ENCODE measurements at regions of chr6 and their contacts with region 1.

Region 1: DNA sequence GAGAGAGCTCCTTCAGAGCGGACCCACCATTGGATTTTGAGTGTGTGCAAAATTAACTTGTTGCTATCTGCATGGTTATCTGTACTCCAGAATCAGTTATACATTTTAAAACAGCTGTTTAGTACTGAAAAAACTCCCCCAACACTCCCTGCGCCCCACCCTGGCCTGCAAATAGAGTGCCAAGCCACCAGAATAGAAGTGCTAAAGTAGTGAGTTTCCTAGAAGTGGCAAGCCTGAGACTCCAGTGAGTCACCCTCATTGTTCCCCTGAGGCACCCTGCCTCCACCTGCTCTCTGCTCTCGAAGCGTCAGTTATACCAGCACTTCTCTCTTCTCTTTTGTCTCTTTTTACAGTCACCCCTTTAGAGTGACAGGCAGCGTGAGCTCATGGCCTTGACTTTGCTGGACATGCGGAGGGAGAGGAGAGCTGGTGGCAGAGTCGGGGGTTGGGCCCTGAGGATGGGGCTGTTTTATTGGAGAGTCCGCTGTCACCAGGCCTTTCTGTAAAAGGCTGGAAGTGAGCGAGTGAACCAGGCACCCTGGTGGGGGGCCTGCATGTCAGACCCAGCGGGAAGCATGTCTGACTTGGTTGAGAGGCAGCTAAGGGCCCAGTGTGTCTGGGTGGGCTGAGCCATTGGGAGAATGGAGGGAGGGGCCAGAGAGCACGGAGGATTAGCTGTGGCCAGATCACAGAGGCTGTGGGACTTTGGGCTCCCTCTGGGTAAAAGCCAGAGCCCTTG is 10.4 kb downstream of the IGF2R start:
- DNase-seq: peak in 2 of 4 experiments; percentile 65 to 78
- ATAC-seq: peak; percentile 16
- H3K4me3 ChIP-seq: no peak overlapping the region
- H3K27ac ChIP-seq: peak overlapping the region; percentile 59; the same call in 2 of the 3 replicates
- H3K4me1 ChIP-seq: peaks cover 65 to 80% of the 10 kb centered on the region in 2 experiments
- H3K27me3 ChIP-seq: no peaks in the 10 kb centered on the region
- CTCF ChIP-seq: no peak
- EP300 ChIP-seq: no peak
- POLR2A ChIP-seq: no peak
- RAD21 ChIP-seq: no peak

Region 2: DNA sequence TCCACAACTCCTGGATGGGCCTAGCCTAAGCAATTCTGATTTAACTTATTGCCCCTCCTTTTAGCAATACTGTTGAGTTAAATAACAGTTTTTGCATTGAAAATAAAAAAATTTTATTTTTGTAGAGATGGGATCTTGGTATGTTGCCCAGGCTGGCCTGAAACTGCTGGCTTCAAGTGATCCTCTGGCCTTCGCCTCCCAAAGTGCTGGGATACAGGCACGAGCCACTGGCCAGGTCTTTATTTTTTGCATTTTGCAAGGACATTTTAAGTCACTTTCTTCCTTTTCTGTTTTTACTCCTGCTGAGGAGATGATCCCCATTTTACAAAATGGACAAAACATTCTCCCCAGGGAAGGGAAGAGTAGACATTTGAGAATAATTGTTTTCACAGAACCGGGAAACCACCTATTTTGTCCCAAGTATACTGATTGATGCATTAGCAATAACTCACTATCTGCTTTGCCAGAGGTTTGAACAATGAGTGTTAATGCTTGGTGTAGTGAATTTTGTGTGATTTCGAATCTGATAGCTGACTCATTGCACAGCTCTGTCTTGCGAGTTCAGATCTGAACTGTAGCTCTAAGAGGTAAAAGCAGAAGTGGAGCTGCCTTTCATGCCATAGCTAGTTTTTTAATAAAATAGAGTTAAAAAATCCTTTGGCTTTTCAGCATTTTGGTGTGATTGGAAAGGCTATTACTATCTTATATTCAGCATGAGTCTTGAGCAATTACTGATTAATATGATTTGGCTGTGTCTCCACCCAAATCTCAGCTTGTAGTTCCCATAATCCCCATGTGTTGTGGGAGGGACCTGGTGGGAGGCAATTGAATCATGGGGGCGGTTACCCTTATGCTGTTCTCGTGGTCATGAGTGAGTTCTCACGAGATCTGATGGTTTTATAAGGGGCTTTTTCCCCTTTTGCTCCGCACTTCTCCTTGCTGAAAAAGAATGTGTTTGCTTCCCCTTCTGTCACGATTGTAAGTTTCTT is 10.5 kb after region 1 on chr6:
- CTCF ChIA-PET with region 1: no interaction called
- POLR2A ChIA-PET with region 1: interaction called, 72 read pairs
- in situ Hi-C with region 1: no loop called
- intact Hi-C with region 1: no loop called
- DNase-seq: peak in 1 of 4 experiments; percentile 75
- ATAC-seq: peak; percentile 72
- H3K4me3 ChIP-seq: peak overlapping the region; percentile 1; the same call in 1 of the 2 replicates
- H3K27ac ChIP-seq: peak overlapping the region; percentile 97
- H3K4me1 ChIP-seq: peaks cover 27 to 46% of the 10 kb centered on the region in 2 experiments
- H3K27me3 ChIP-seq: no peaks in the 10 kb centered on the region
- CTCF ChIP-seq: no peak
- EP300 ChIP-seq: peak; percentile 71
- POLR2A ChIP-seq: no peak
- RAD21 ChIP-seq: no peak

Region 3: GRCh38 chr6:160146454-160147145 is 167.3 kb after region 1 on chr6:
- CTCF ChIA-PET with region 1: no interaction called
- POLR2A ChIA-PET with region 1: no interaction called
- in situ Hi-C with region 1: no loop called
- intact Hi-C with region 1: no loop called
- DNase-seq: no peak
- ATAC-seq: peak; percentile 85
- H3K4me3 ChIP-seq: no peak overlapping the region
- H3K27ac ChIP-seq: no peak overlapping the region
- H3K4me1 ChIP-seq: 0 out of 5 replicates have a peak, but pooled peaks cover 0 to 7% of the 10 kb centered on the region in 2 experiments
- H3K27me3 ChIP-seq: peaks cover 0 to 4% of the 10 kb centered on the region in 2 experiments; a peak in 2 of 5 replicates
- CTCF ChIP-seq: no peak
- EP300 ChIP-seq: no peak
- POLR2A ChIP-seq: no peak
- RAD21 ChIP-seq: no peak

Measured in K562 (cell line).